HepG2 (cell line): ENCODE measurements at regions of chr17 and their contacts with region 1.

Region 1: GRCh38 chr17:29293890-29294579 is at the start of gene NUFIP2:
- DNase-seq: peak; percentile 96
- ATAC-seq: peak; percentile 97
- H3K4me3 ChIP-seq: peak within 1 kb of the TSS; percentile 92 to 99 (median 93)
- H3K27ac ChIP-seq: peak within 1 kb of the TSS; percentile 92
- H3K4me1 ChIP-seq: peaks cover 27% of the 10 kb centered on the region
- H3K27me3 ChIP-seq: no peaks in the 10 kb centered on the region; a peak in 1 of 5 replicates
- CTCF ChIP-seq: no peak
- EP300 ChIP-seq: no peak
- POLR2A ChIP-seq: peak; percentile 99 to 100
- RAD21 ChIP-seq: 0 out of 2 replicates have a peak, but pooled peaks have one; percentile 2
- total RNA-seq, gene NUFIP2: 30.8 and 51.1 TPM in 2 replicates

Region 2: GRCh38 chr17:29111816-29112499 is 182.1 kb before region 1 on chr17:
- CTCF ChIA-PET with region 1: no interaction called
- POLR2A ChIA-PET with region 1: no interaction called
- in situ Hi-C with region 1: no loop called
- intact Hi-C with region 1: no loop called
- DNase-seq: peak; percentile 41
- ATAC-seq: peak; percentile 74
- H3K4me3 ChIP-seq: no peak overlapping the region
- H3K27ac ChIP-seq: no peak overlapping the region
- H3K4me1 ChIP-seq: peaks cover 16% of the 10 kb centered on the region
- H3K27me3 ChIP-seq: no peaks in the 10 kb centered on the region
- CTCF ChIP-seq: peak; percentile 95
- EP300 ChIP-seq: no peak
- POLR2A ChIP-seq: no peak
- RAD21 ChIP-seq: peak; percentile 80

Region 3: DNA sequence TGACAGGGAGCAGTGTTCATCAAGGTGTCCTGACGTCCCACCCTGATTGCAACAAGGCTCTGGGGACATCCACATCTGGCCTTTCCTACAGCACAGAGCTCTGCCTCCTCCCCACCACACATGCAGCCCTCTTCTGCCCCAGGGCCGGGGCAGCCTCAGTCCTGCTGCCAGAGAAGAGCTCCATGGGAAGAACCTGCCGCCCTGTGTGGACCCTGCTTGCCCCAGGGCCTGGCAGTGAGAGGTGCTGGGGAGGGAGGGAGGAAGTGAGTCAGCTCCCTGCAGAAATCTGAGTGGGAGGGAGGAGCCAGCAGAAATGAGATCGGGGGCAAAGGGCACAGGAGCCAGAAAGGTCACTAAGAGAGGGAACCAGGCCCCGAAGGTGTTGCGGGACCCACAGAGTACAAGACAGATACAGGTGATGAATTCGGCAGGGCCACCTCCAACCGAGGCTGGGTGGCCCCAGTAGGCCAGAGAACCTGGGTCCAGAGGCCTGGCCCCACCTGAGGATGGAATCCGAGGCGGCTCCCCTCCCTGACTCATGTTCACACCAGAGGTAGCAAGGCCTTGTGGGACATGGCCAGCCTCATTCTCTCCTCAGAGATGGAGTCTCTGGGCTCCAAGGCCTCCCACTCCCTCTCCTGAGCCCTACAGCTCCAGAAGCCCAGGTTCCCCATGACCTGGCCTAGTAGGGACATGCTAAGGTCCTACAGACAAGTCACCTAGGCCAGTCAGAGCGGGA is 138.6 kb before region 1 on chr17:
- CTCF ChIA-PET with region 1: no interaction called
- POLR2A ChIA-PET with region 1: interaction called, 22 read pairs
- in situ Hi-C with region 1: no loop called
- intact Hi-C with region 1: loop called (anchors 10 kb)
- DNase-seq: peak; percentile 85
- ATAC-seq: peak; percentile 81
- H3K4me3 ChIP-seq: peak overlapping the region in 1 of 3 experiments; percentile 48; a peak in 1 of 6 replicates
- H3K27ac ChIP-seq: peak overlapping the region; percentile 73
- H3K4me1 ChIP-seq: peaks cover 100% of the 10 kb centered on the region
- H3K27me3 ChIP-seq: no peaks in the 10 kb centered on the region
- CTCF ChIP-seq: peak; percentile 17; the same call in 1 of the 2 replicates
- EP300 ChIP-seq: peak in 1 of 2 experiments; percentile 62; a peak in 2 of 4 replicates
- POLR2A ChIP-seq: 0 out of 4 replicates have a peak, but pooled peaks of 1 of the 2 experiments have one; percentile 46
- RAD21 ChIP-seq: 0 out of 2 replicates have a peak, but pooled peaks have one; percentile 10

Region 4: GRCh38 chr17:29219378-29220047 is 74.5 kb before region 1 on chr17:
- CTCF ChIA-PET with region 1: interaction called, 5 read pairs
- POLR2A ChIA-PET with region 1: interaction called, 3 read pairs
- in situ Hi-C with region 1: no loop called
- intact Hi-C with region 1: loop called (anchors 2 kb)
- DNase-seq: peak; percentile 77
- ATAC-seq: peak; percentile 97
- H3K4me3 ChIP-seq: no peak overlapping the region
- H3K27ac ChIP-seq: no peak overlapping the region
- H3K4me1 ChIP-seq: peaks cover 10% of the 10 kb centered on the region
- H3K27me3 ChIP-seq: peaks cover 1 to 8% of the 10 kb centered on the region in 2 experiments; a peak in 3 of 5 replicates
- CTCF ChIP-seq: peak; percentile 91
- EP300 ChIP-seq: no peak
- POLR2A ChIP-seq: no peak
- RAD21 ChIP-seq: peak; percentile 74

Region 5: DNA sequence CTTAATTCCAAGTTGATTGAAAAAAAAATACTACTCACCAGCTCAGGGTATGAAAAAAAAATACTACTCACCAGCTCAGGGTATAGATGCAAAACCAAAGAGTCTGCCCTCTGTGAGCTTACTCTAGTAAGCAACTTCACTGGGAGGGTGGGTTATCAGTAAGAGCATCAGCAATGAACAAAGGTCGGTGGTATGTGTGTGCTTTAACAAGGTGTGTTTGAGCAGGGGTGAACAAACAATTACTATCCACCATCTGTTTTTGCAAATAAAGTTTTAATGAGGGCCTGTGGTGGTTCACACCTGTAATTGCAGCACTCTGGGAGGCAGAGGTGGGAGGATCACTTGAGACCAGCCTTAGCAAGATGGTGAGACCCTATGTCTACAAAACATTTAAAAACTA is 20.1 kb before region 1 on chr17:
- CTCF ChIA-PET with region 1: no interaction called
- POLR2A ChIA-PET with region 1: interaction called, 20 read pairs
- in situ Hi-C with region 1: no loop called
- intact Hi-C with region 1: no loop called
- DNase-seq: peak; percentile 68
- ATAC-seq: peak; percentile 85
- H3K4me3 ChIP-seq: no peak overlapping the region
- H3K27ac ChIP-seq: peak overlapping the region; percentile 3
- H3K4me1 ChIP-seq: peaks cover 57% of the 10 kb centered on the region
- H3K27me3 ChIP-seq: no peaks in the 10 kb centered on the region
- CTCF ChIP-seq: no peak
- EP300 ChIP-seq: peak in 1 of 2 experiments; percentile 23; a peak in 1 of 4 replicates
- POLR2A ChIP-seq: no peak
- RAD21 ChIP-seq: no peak

Region 6: GRCh38 chr17:29357821-29358232 is 63.8 kb after region 1 on chr17:
- CTCF ChIA-PET with region 1: no interaction called
- POLR2A ChIA-PET with region 1: interaction called, 3 read pairs
- in situ Hi-C with region 1: no loop called
- intact Hi-C with region 1: loop called (anchors 2 kb)
- DNase-seq: no peak
- ATAC-seq: no peak
- H3K4me3 ChIP-seq: no peak overlapping the region
- H3K27ac ChIP-seq: no peak overlapping the region
- H3K4me1 ChIP-seq: no peaks in the 10 kb centered on the region
- H3K27me3 ChIP-seq: no peaks in the 10 kb centered on the region
- CTCF ChIP-seq: no peak
- EP300 ChIP-seq: no peak
- POLR2A ChIP-seq: no peak
- RAD21 ChIP-seq: no peak

Region 7: DNA sequence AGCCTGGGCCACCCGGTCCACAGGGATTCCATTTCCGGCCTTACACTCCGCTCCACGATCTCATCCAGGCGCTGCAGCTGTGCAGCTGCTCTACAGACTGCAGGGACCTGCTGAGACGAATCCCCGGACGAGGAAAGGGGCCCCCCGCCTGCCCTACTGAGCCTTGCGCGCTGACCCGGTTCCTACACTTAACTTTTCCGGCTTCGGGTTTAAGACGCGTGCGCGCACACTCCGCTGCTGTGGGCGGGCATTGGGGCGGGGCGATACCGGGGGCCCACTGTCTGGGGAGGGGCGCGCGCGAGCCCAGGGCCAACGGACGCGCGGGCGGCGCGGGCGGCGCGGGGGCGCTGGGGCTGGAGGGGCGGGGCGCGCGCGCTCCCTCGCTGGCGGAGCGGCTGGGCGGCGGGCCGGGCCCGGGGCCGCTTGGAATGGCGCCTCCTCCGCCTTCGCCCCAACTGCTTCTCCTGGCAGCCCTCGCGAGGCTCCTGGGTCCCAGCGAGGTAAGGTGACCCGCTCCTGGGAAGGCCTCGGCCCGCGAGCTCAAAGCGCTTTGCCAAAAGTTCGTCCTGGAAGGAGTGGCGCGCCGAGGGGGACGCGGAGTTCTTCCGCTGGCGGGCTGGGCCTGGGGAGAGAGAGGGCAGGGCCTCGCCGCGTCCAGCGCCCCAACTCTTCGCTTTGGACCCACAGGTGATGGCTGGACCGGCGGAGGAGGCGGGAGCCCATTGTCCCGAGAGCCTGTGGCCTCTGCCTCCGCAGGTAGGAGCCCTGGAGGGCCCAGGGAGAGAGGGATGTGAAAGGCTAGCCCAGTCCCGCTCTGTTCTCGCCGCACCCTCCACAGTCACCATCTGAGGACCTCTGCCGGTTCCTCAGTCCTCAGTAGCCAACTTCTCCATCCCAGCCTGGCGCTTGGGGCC is 274.6 kb after region 1 on chr17 and contains the start of gene TP53I13:
- CTCF ChIA-PET with region 1: no interaction called
- POLR2A ChIA-PET with region 1: interaction called, 11 read pairs
- in situ Hi-C with region 1: no loop called
- intact Hi-C with region 1: loop called (anchors 10 kb)
- DNase-seq: peak; percentile 51
- ATAC-seq: peak; percentile 25
- H3K4me3 ChIP-seq: peak within 1 kb of the TSS; percentile 72 to 94 (median 84)
- H3K27ac ChIP-seq: peak within 1 kb of the TSS; percentile 86
- H3K4me1 ChIP-seq: peaks cover 29% of the 10 kb centered on the region
- H3K27me3 ChIP-seq: no peaks in the 10 kb centered on the region
- CTCF ChIP-seq: no peak; the same call in 1 of the 2 replicates
- EP300 ChIP-seq: no peak
- POLR2A ChIP-seq: peak; percentile 12 to 72; a peak in 2 of 4 replicates
- RAD21 ChIP-seq: no peak; the same call in 1 of the 2 replicates
- total RNA-seq, gene TP53I13: 9.9 and 25.7 TPM in 2 replicates